A549 (cell line): ENCODE measurements at regions of chr14 and their contacts with region 1.

Region 1: DNA sequence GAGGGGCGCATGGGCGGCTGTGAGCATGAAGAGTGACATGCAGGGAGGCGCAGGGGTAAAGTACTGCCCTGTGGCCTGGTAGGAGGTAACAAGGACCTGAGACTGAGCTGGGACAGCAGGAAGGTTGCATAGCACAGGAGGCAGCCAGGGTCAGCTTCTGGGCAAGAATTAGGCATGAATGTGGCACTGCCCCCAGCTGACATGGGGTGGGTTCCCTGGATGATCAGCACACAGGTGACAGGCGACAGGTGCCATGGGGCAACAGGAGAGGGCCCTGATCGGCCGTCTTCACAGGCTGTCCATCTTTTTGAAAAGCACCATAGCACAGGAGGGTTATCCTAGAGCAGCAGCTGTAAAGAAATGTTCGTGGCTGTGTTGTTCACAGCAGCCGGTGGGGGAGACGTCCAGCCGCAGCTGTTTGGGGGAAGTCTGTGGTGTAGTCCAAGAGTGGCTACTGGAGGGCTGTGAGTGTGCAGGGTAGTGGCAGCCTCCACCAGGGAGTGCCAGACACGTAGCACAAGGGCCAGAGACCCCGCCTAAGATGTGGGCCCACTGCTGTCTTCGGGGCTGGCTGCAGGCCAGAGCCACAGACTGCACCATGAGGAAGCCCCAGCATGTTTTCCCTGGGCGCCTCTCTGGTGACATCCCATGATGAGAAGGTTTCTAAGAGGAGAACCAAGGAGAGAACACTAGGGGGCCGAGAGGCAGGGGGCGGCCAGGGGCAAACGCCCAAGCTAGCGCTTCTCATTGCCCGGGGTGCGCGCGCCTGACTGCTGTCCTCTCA is 8.4 kb downstream of the CLBA1 start:
- DNase-seq: no peak
- ATAC-seq: peak; percentile 33 to 37; a peak in 3 of 6 replicates
- H3K4me3 ChIP-seq: no peak overlapping the region
- H3K27ac ChIP-seq: no peak overlapping the region
- H3K4me1 ChIP-seq: no peaks in the 10 kb centered on the region
- CTCF ChIP-seq: no peak
- EP300 ChIP-seq: no peak
- POLR2A ChIP-seq: no peak
- RAD21 ChIP-seq: no peak

Region 2: DNA sequence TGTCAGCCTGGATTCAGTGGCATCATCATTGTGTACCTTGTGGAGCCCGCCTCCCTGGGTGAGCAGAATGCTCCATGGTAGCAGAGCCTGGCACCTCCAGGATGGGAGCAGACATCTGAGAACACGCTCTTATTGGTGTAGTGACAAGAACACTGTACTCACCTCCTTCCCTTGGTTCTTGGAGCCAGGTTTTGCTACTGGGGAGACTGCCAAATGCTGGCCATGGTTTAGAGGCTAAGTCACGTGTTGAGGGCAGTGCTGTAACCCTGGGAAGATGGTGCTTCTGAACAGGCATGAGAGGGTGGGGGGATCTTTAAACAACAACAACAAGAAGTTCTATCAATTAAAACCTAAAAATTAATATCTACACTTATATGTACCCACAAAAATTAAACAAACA is 956.1 kb before region 1 on chr14:
- CTCF ChIA-PET with region 1: no interaction called
- POLR2A ChIA-PET with region 1: no interaction called
- DNase-seq: no peak
- ATAC-seq: no peak
- H3K4me3 ChIP-seq: no peak overlapping the region
- H3K27ac ChIP-seq: no peak overlapping the region
- H3K4me1 ChIP-seq: no peaks in the 10 kb centered on the region
- CTCF ChIP-seq: no peak
- EP300 ChIP-seq: no peak
- POLR2A ChIP-seq: no peak
- RAD21 ChIP-seq: no peak

Region 3: DNA sequence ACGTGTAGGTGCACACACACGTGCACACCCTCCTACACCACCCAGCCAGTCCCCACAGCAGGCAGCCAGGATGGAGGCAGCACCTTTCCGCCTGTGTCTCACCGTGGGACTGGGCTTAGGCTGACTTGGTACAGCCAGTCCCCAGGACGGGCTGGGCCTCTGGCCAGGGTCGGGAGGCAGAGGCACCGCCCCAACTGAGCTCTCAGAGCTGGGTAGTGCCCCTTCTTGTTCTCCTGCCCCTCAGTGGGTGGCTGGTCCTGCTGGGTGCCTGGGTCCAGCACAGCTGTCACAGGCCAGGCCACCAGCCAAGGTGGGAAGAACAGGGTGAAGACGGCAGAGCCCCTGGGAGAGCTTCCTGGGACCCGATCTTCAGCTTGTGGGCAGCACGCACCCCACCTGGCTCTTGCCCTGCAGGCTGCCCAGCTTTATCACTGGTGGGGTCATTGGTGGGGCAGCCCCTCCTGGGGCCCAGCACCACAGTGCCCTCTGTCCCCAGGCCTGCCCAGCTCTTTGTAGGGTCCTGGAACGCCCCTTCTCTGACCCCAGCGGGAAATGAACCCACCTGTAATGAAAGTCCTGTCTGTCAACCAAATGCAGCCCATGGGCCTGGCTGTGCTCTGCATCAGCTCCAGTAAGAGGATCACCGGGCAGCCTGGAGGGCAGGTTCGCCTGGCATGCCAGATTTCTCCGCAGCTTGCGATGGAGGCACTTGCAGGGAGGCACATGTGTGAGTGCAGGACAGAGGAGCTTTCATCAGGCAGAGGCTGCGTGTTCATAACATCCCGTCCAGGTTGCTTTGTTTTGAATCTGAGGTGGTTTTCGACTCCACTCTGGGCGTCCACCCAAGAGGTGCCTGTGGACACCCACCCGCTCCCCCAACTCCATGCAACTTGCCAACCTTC is 12.2 kb after region 1 on chr14:
- CTCF ChIA-PET with region 1: interaction called, 49 read pairs
- POLR2A ChIA-PET with region 1: no interaction called
- DNase-seq: no peak
- ATAC-seq: peak; percentile 47 to 51
- H3K4me3 ChIP-seq: no peak overlapping the region
- H3K27ac ChIP-seq: no peak overlapping the region
- H3K4me1 ChIP-seq: no peaks in the 10 kb centered on the region
- CTCF ChIP-seq: no peak
- EP300 ChIP-seq: no peak
- POLR2A ChIP-seq: no peak
- RAD21 ChIP-seq: no peak